Endothelial cell of umbilical vein (primary cell): ENCODE measurements at regions of chr4 and their contacts with region 1.

Region 1: GRCh38 chr4:112145326-112145819 is at the start of gene FAM241A:
- DNase-seq: peak; percentile 81
- H3K4me3 ChIP-seq: peak within 1 kb of the TSS; percentile 88 to 96 (median 91)
- H3K27ac ChIP-seq: peak within 1 kb of the TSS; percentile 77
- H3K4me1 ChIP-seq: peaks cover 24% of the 10 kb centered on the region
- H3K27me3 ChIP-seq: no peaks in the 10 kb centered on the region
- CTCF ChIP-seq: no peak
- POLR2A ChIP-seq: peak; percentile 92
- total RNA-seq, gene FAM241A: 8.3 and 9.1 TPM in 2 replicates

Region 2: DNA sequence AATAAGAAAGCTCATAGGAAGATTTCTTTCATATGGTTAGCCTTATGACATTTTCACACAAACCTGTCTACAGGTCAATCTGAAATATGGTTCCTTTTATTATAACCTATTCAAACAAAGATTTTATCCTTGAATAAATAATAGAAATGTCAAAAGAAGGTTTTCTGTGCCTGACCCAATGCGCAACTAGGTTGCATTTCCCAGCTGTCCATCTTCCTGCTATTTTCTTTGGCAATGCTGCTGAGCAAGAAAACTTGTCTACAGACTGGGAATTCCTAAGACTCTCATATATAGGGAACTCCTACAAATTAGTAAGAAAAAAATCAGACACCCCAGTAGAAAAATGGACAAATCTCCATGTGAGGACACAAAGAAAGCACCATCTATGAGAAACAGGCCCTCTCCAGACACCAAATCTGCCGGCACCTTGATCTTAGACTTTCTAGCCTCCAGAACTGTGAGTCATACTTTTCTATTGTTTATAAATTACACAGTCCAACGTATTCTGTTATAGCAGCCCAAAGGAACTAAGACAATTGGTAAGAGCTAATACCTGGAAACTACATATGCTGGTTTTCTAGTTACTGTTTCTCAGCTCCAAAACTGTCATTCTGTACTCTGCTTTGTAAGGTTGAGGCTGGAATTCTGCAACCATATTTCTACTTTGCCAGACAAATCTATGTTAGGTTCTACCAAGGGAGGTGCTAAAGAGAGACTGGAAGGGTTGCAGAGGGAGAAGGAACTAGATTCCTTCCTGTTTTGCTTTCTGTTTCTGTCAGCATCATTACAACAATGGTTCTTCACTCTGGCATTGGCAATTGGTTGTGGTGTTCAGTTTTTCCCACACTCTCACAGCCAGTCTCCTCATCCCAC is 36.0 kb before region 1 on chr4:
- CTCF ChIA-PET with region 1: interaction called, 3 read pairs
- POLR2A ChIA-PET with region 1: interaction called, 3 read pairs
- dilution Hi-C with region 1: no loop called
- intact Hi-C with region 1: loop called (anchors 1 kb)
- DNase-seq: peak; percentile 86
- H3K4me3 ChIP-seq: peak overlapping the region in 1 of 3 experiments; percentile 28
- H3K27ac ChIP-seq: peak overlapping the region; percentile 94
- H3K4me1 ChIP-seq: peaks cover 20% of the 10 kb centered on the region
- H3K27me3 ChIP-seq: no peaks in the 10 kb centered on the region
- CTCF ChIP-seq: no peak
- POLR2A ChIP-seq: peak; percentile 55

Region 3: GRCh38 chr4:112127803-112128202 is 17.6 kb before region 1 on chr4:
- CTCF ChIA-PET with region 1: interaction called, 4 read pairs
- POLR2A ChIA-PET with region 1: no interaction called
- dilution Hi-C with region 1: no loop called
- intact Hi-C with region 1: loop called (anchors 2 kb)
- DNase-seq: peak; percentile 39
- H3K4me3 ChIP-seq: no peak overlapping the region
- H3K27ac ChIP-seq: no peak overlapping the region
- H3K4me1 ChIP-seq: peaks cover 4% of the 10 kb centered on the region
- H3K27me3 ChIP-seq: no peaks in the 10 kb centered on the region
- CTCF ChIP-seq: no peak
- POLR2A ChIP-seq: no peak

Region 4: DNA sequence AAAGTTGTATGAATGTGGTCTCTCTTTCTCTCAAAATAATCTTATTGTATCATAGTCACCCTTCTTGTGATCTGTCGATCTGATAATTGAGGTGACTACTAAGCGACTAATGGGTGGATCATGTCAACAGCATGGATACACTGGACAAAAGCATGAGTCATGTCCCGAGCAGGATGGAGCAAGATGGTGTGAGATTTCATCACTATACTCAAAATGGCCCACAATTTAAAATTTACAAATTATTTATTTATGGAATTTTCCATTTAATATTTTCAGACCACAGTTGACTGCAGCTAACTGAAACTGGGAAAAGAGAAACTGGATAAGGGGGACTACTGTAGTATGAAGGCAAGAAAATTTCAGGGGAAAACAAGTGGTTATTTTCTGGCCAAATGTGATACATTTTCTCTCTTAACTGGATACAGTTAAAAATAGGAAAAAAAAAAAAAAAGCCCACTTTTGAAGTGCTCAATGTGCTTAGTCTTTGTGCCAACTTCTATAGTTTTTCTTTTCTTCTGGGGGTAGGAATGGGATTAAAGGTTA is 25.1 kb after region 1 on chr4:
- CTCF ChIA-PET with region 1: interaction called, 3 read pairs
- POLR2A ChIA-PET with region 1: no interaction called
- dilution Hi-C with region 1: no loop called
- intact Hi-C with region 1: loop called (anchors 1 kb)
- DNase-seq: peak; percentile 74
- H3K4me3 ChIP-seq: no peak overlapping the region
- H3K27ac ChIP-seq: peak overlapping the region; percentile 74
- H3K4me1 ChIP-seq: peaks cover 22% of the 10 kb centered on the region
- H3K27me3 ChIP-seq: no peaks in the 10 kb centered on the region
- CTCF ChIP-seq: no peak
- POLR2A ChIP-seq: no peak

Region 5: GRCh38 chr4:112284662-112285411 is 139.5 kb after region 1 on chr4:
- CTCF ChIA-PET with region 1: no interaction called
- POLR2A ChIA-PET with region 1: no interaction called
- dilution Hi-C with region 1: no loop called
- intact Hi-C with region 1: loop called (anchors 2 kb)
- DNase-seq: peak; percentile 69
- H3K4me3 ChIP-seq: peak overlapping the region; percentile 77 to 98 (median 92)
- H3K27ac ChIP-seq: peak overlapping the region; percentile 61
- H3K4me1 ChIP-seq: peaks cover 16% of the 10 kb centered on the region
- H3K27me3 ChIP-seq: no peaks in the 10 kb centered on the region
- CTCF ChIP-seq: no peak
- POLR2A ChIP-seq: no peak